Cardiac septum (tissue), 1 donor: ENCODE measurements at regions of chr4 and their contacts with region 1.

Region 1: DNA sequence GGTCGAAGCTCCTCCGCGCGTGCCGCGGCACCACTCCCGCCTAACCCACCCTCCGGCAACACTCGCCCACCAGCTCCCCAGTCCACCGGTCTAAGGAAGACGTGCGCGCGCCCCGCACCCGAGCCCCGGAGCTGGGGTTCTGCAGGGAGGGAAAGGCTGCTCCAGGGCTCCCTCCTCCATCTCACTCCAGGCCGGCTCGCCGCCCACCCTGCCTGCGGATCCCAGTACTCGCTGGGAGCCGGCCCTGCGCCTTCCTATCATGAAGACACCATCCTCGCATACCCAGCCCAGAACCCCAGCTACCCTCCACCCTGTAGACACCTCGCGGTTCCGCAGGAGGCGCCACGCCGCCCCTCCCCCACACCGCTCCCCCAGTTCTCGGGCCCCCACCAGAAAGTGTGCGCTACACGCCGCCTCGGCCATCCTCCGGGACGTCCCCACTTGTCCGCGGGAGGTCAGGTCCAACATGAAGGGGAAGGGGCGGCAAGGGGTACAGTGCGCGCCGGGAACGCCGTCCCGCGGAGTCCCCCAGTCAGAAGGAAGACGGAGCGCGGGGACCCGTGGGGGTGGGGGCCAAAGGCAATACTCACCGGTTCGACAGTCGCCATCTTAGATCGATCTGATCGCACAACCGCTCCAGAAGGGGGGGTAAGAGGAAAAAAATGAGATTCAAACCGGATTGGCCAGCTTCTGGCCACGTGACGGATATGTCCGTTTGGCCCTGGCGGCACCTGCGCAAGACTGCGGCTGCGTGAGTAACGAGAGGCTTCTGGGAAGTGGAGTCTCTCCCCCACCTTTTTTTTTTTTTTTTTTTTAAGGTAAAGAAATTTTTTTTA is at the start of gene EIF4E:
- DNase-seq: peak; percentile 98
- total RNA-seq, gene EIF4E: 57.5 TPM

Region 2: DNA sequence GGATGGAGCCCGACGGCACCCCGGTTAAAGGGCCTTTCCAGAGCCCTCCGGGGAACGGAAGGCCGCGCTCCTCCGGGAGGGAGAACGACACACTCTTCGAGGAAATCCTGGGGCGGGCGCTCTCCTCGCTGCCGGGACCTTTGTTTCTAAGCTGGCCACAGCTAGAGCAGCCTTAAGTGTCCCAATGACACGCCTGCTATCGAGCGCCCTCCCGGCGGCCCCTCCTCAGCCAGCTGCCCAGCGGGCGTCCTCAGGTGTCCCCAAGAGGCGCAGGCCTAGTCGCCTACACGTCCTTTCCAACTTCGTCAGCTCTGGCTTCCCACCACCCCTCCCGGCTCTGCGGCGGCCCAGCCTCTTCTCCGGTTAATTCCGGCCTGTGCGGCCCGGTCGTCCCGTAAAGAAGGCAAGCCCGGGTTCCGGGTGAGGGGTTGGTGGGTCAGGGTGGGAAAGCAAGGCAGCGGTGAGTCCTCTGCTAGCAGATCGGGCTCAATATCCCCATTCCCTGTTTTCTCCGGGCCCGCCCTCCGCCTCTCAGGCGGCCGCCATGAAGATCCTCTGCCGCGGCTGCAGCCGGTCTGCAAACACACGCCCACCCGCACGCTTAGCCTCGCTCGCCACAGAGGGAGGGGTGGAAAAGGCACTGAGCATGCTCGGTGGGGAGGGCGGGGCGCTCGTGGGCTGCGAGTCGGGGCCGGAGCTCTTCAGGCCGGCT is 668.0 kb before region 1 on chr4:
- intact Hi-C with region 1: loop called (anchors 2 kb)
- DNase-seq: peak; percentile 97

Region 3: GRCh38 chr4:98467627-98468072 is 461.1 kb before region 1 on chr4:
- intact Hi-C with region 1: loop called (anchors 1 kb)
- DNase-seq: no peak

Region 4: GRCh38 chr4:98658287-98659105 is 270.2 kb before region 1 on chr4 and contains the start of gene TSPAN5:
- intact Hi-C with region 1: loop called (anchors 2 kb)
- DNase-seq: peak; percentile 83
- total RNA-seq, gene TSPAN5: 8.6 TPM

Region 5: GRCh38 chr4:98995183-98996055 is 66.7 kb after region 1 on chr4 and contains the start of gene METAP1:
- intact Hi-C with region 1: loop called (anchors 2 kb)
- DNase-seq: peak; percentile 97
- total RNA-seq, gene METAP1: 56.2 TPM

Region 6: DNA sequence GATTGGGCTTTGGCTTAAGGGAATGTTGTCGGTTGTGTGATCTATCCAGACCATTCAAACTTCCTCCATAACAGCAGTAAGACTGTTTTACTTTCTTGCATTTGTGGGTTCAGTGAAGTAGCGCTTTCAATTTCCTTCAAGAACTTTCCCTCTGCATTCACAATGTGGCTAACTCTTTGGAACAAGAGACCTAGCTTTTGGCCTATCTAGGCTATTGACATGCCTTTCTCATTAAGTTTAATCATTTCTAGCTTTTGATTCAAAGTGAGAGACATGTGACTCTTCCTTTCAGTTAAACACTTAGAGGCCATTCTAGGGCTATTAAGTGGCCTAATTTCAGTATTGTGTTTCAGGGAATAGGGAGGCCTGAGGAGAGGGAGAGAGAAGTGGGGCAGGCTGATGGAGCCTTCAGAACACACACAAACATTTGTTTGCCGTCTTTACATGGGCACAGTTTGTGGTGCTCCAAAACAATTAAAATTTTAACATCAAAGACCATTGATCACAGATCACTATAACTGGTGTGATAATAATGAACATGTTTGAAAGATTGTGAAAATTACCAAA is 125.8 kb after region 1 on chr4:
- intact Hi-C with region 1: loop called (anchors 5 kb)
- DNase-seq: no peak

Region 7: GRCh38 chr4:99088481-99089365 is 160.0 kb after region 1 on chr4 and contains the start of gene ADH5:
- intact Hi-C with region 1: loop called (anchors 1 kb)
- DNase-seq: peak; percentile 92
- total RNA-seq, gene ADH5: 132 TPM

Region 8: GRCh38 chr4:99330648-99331047 is 401.9 kb after region 1 on chr4:
- intact Hi-C with region 1: no loop called
- DNase-seq: no peak